Head of caudate nucleus (tissue), 42 donors: ENCODE measurements at regions of chr5 and their contacts with region 1.

Region 1: GRCh38 chr5:39948867-39949468 is 524.2 kb upstream of the DAB2 start:
- DNase-seq: peak in 31 of 42 donors; percentile 11 to 85 (median 59)

Region 2: GRCh38 chr5:39616131-39616530 is 332.8 kb before region 1 on chr5:
- intact Hi-C with region 1: no loop called
- DNase-seq: no peak

Region 3: DNA sequence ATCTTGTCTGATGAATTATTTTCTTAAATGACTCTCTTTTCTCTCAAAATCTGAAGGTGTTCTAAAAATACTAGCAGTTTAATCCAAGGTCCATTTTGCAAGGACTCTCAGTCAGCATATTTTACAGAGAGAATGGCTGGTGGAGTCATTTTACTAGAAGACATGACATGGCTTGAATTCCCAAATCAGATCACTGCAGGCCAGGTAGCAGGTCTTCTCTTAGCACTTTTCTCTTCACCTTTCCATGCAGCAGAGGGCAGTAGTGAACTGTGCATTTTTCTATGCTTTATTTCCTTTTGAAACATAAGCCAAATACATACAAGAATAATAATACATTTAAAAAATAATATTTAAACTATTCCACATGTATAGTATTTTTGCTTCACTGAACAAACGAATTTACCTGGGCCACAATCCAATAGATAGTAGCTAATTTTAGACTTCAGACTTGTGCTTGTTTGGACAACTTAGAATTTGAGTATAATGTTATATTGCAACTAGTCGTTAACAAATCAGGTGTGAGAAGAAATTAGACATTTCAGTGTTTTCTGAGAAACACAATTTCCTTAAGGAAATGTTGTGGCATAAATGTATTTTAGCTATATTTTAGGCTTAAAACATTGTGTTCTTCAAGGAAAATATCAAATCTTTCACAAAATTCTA is 234.8 kb before region 1 on chr5:
- intact Hi-C with region 1: no loop called
- DNase-seq: peak in 24 of 42 donors; percentile 4 to 69 (median 46)

Region 4: GRCh38 chr5:40010436-40010835 is 61.5 kb after region 1 on chr5:
- intact Hi-C with region 1: no loop called
- DNase-seq: no peak

Region 5: DNA sequence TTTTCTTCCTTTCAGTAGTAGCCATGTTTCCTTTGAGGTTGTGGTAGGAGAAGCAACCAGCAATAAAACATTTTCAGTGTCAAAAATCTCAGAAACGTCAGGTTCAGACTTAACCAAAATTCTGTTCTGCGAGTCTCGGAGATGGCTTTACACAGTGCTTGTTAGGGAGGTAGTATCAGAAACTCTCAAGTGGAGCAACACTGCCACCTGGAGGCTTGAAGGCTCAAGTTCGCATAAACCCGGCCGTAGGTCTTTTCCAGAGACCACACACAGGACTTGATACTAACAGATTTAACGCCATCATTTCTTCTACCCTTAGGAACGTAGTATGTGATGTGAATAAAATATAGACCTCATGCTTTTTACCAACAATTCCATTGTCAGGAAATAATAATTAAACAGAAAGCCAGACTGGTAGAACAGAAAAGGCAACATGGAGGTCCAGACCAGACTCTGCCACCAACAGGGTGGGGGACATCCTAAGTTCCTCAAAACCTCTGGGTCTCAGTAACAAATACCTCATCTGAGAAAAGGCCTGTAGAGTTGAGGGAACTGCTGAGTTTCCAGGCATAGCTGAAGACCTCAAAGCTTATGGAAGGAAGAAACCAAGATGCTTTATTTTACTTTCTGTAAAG is 739.3 kb after region 1 on chr5:
- intact Hi-C with region 1: loop called (anchors 5 kb)
- DNase-seq: peak; percentile 66 to 95 (median 87)

Region 6: DNA sequence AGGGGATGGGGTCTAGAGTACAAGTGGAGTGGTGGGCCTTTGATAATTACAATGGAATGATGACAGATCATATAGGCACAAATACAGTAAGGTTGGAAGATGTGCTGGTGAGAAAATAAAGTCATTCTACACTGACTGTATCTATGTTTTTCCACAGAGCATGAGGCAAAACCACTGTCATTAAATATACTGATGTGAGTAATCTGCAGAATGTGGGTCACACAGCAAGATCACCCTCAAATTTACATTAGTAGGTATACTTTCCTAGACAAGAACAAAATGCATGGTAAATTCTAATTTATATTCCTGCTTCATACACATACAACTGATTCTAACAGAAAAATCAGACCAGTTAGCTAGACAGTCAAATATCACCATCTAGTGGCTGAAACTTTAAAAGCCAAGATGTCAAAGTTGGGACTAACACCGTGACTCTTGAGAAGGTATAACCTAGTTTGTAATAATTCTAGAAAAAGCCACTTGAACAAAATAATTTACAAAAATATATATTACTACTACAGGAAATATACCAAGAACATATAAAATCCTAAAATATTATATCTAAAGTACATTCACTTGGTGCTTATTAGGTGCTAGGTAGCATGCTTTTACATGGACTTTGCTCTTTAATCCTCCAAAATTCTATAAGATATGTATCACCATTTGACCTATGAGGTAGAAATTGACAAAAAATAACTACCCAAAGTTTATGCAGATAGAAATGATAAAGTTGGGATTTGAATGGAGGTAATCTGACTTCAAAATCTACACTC is 787.3 kb after region 1 on chr5:
- intact Hi-C with region 1: loop called (anchors 5 kb)
- DNase-seq: peak in 2 of 42 donors; percentile 23 to 71